ENCODE measurements at regions of chr3 and their contacts with region 1.

Region 1: GRCh38 chr3:12458901-12459558 is 25.2 kb upstream of the TSEN2 start:
- DNase-seq: no peak
- H3K4me3 ChIP-seq: no peak overlapping the region
- H3K27ac ChIP-seq: no peak overlapping the region
- H3K4me1 ChIP-seq: peaks cover 0 to 2% (median 0%) of the 10 kb centered on the region in 4 experiments; a peak in 1 of 7 replicates
- H3K27me3 ChIP-seq: no peaks in the 10 kb centered on the region
- CTCF ChIP-seq: peak in 2 of 3 experiments; percentile 12 to 25; a peak in 2 of 4 replicates
- EP300 ChIP-seq: no peak
- POLR2A ChIP-seq: no peak
- RAD21 ChIP-seq: no peak; a peak in 1 of 4 replicates

Region 2: DNA sequence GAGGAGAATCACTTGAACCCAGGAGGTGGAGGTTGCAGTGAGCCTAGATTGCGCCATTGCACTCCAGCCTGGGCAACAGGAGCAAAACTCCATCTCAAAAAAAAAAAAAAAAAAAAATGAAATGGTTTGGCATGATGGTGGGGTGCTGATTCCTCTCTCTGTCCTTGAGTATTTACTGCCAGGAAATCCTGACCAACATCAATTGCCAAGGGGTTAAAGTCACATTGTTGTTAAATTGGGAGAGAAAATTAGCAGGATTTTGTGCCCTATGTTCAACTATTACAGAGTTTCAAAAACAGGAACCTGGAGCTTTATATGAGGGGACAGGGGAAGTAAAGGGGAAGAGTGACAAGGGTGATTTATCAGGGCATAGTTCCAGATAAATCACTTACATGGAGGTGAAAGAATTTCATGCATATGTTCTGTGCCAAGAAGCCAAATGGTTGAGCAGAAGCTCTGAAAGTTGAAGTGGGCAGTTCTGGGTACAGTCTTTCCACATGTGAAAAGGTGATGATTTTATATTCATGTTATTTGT is 45.2 kb before region 1 on chr3:
- CTCF ChIA-PET with region 1: no interaction called
- POLR2A ChIA-PET with region 1: no interaction called
- DNase-seq: no peak
- H3K4me3 ChIP-seq: no peak overlapping the region
- H3K27ac ChIP-seq: no peak overlapping the region
- H3K4me1 ChIP-seq: no peaks in the 10 kb centered on the region
- H3K27me3 ChIP-seq: no peaks in the 10 kb centered on the region
- CTCF ChIP-seq: no peak
- EP300 ChIP-seq: no peak
- POLR2A ChIP-seq: no peak
- RAD21 ChIP-seq: no peak

Region 3: GRCh38 chr3:12471243-12471651 is 12.2 kb after region 1 on chr3:
- CTCF ChIA-PET with region 1: interaction called, 25 read pairs
- POLR2A ChIA-PET with region 1: no interaction called
- DNase-seq: no peak
- H3K4me3 ChIP-seq: no peak overlapping the region
- H3K27ac ChIP-seq: no peak overlapping the region
- H3K4me1 ChIP-seq: peaks cover 0 to 4% (median 0%) of the 10 kb centered on the region in 4 experiments; a peak in 2 of 7 replicates
- H3K27me3 ChIP-seq: no peaks in the 10 kb centered on the region
- CTCF ChIP-seq: peak in 2 of 3 experiments; percentile 6 to 34; a peak in 2 of 4 replicates
- EP300 ChIP-seq: no peak
- POLR2A ChIP-seq: no peak
- RAD21 ChIP-seq: peak; percentile 17 to 36; a peak in 2 of 4 replicates

Region 4: DNA sequence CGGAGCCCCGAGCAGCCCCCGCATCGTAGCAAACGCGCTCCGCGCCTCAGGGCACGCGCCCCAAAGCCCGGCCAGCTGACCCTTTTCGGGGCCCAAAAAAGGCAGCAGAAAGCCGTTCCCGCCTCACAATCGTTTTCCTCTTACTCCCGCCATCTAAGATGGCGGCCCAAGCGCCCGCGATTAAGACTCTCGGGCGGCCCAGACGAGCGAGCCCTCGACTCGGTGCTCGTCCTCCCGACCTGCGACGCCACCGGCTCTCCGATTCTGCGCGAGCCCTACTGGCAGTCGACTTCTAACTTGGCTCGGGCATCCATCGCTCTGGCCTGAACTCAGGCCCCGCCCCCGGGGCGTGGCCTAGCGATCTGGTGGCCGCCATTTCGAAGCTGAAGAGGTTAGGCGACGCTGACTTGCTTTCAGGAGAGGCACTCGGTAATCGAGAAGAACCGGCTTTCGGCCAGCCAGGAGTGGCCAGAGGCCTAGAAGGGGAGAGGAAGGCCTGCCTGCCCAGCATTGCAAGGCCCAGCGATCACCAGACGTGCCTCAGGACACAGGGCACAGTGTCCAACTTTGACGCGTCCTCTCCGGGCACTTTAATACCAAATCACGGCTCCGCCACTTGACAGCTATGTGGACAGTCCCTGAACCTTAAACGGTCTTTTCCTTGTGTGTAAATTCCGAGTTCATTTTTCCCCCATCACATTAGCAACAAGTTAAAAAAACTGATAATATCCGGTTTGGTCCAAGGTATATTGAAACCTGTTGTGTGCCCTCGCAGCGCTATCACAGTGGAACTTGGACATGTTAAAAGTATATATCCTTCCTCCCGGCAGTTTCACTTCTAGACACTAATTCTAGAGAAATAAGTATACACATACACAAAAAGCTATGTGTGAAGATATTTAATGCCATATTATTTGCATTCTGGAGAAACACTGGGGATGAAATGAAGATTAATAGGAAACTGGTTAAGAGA is 205.2 kb after region 1 on chr3 and contains the start of gene RAF1:
- CTCF ChIA-PET with region 1: no interaction called
- POLR2A ChIA-PET with region 1: no interaction called
- DNase-seq: peak; percentile 97 to 98
- H3K4me3 ChIP-seq: peak within 1 kb of the TSS; percentile 90 to 98 (median 97)
- H3K27ac ChIP-seq: peak within 1 kb of the TSS; percentile 98
- H3K4me1 ChIP-seq: peaks cover 0 to 6% (median 0%) of the 10 kb centered on the region in 4 experiments; a peak in 4 of 7 replicates
- H3K27me3 ChIP-seq: no peaks in the 10 kb centered on the region
- CTCF ChIP-seq: peak in 1 of 3 experiments; percentile 14; a peak in 1 of 4 replicates
- EP300 ChIP-seq: peak in 1 of 2 experiments; percentile 58; a peak in 1 of 3 replicates
- POLR2A ChIP-seq: peak; percentile 66 to 73
- RAD21 ChIP-seq: no peak
- total RNA-seq, gene RAF1: 96.7 and 103 TPM in 2 replicates